Activated CD8-positive, alpha-beta T cell treated with anti-CD3 and anti-CD28 coated beads for 36 hours (primary cell): ENCODE measurements at regions of chr9 and their contacts with region 1.

Region 1: DNA sequence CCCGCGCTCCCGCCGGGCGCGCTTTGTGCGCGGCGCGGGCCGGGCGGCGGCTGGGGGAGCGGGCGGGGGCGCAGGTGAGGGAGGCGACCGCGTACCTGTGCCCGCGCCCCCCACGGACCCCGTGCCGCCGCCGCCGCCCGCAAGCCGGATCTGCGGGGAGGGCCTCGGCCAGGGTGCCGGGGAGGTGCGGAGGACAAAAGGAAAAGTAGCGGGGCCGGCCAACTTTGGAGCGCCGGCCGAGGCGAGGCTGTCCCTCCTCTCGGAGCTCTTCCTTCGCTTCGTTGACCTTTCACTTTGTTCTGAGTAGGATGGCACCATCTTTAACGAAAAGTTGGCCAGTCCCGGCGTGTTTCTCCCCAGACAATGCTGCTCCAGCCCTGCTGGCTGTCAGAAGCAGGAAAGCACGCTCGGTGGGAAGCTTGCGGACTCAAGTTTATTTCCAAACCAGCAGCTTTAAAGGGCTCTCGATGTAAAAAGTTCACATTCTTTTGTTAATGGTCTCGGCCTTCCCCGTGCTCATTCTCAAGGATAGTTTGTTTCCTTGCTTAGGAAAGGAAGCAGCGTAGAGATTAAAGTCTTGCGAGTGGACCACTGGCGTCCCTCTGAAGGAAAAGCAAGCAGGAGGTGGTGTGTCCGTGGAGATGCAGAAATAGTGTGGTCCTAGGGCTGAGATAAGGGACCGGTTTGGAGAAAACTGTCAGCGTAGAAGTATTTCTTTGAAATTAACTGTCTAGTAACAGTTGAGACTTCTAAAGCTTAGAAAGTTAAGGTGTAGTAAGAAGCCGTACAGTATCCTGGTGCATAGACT is 639 bp downstream of the EHMT1 start:
- DNase-seq: peak; percentile 52
- ATAC-seq: peak; percentile 7
- H3K4me3 Mint-ChIP-seq: peak overlapping the region; percentile 82
- H3K27ac Mint-ChIP-seq: peak overlapping the region; percentile 78
- H3K4me1 Mint-ChIP-seq: peaks cover 41% of the 10 kb centered on the region
- H3K27me3 Mint-ChIP-seq: no peaks in the 10 kb centered on the region
- CTCF ChIP-seq: no peak

Region 2: GRCh38 chr9:137564817-137565411 is 54.5 kb before region 1 on chr9:
- CTCF ChIA-PET with region 1: no interaction called
- POLR2A ChIA-PET with region 1: no interaction called
- intact Hi-C with region 1: no loop called
- DNase-seq: no peak
- ATAC-seq: no peak
- H3K4me3 Mint-ChIP-seq: no peak overlapping the region
- H3K27ac Mint-ChIP-seq: no peak overlapping the region
- H3K4me1 Mint-ChIP-seq: peaks cover 3% of the 10 kb centered on the region
- H3K27me3 Mint-ChIP-seq: no peaks in the 10 kb centered on the region
- CTCF ChIP-seq: no peak

Region 3: GRCh38 chr9:137632230-137633161 is 13.1 kb after region 1 on chr9:
- CTCF ChIA-PET with region 1: interaction called, 6 read pairs
- POLR2A ChIA-PET with region 1: interaction called, 11 read pairs
- intact Hi-C with region 1: no loop called
- DNase-seq: no peak
- ATAC-seq: no peak
- H3K4me3 Mint-ChIP-seq: no peak overlapping the region
- H3K27ac Mint-ChIP-seq: no peak overlapping the region
- H3K4me1 Mint-ChIP-seq: peaks cover 51% of the 10 kb centered on the region
- H3K27me3 Mint-ChIP-seq: no peaks in the 10 kb centered on the region
- CTCF ChIP-seq: no peak

Region 4: GRCh38 chr9:137705443-137706293 is 86.2 kb after region 1 on chr9:
- CTCF ChIA-PET with region 1: no interaction called
- POLR2A ChIA-PET with region 1: no interaction called
- intact Hi-C with region 1: no loop called
- DNase-seq: peak; percentile 78
- ATAC-seq: peak; percentile 90
- H3K4me3 Mint-ChIP-seq: no peak overlapping the region
- H3K27ac Mint-ChIP-seq: peak overlapping the region; percentile 57
- H3K4me1 Mint-ChIP-seq: peaks cover 43% of the 10 kb centered on the region
- H3K27me3 Mint-ChIP-seq: no peaks in the 10 kb centered on the region
- CTCF ChIP-seq: no peak